GM13977 (cell line): ENCODE measurements at regions of chr16 and their contacts with region 1.

Region 1: DNA sequence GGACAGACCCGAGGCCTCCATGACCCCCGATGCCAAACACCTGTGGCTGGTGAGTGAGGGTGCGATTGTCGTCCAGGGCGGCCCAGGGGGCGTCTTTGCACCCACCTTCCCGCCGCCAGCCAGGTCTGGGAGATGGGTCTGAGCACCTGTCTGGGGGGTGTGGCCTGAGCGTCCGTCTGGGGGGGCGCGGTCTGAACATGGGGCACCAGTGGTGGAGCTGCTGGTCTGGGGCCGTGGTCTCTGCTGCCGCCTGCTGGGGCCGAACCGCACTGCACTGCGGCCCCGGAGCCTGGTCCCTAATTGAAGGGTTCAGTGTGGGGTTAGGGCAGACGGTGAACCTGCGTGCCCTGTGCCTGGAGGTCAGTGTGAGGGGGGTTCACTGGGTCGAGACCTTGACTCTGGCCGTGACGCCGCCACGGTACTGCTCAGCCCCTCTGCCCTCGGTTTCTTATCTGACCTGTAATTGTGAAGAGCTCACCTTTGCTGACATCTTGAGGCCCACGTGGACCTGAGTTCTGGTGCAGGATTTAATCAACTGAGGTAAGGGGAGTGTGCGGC is 12.6 kb upstream of the TCF25 start:
- DNase-seq: peak; percentile 96
- CTCF ChIP-seq: peak; percentile 100

Region 2: GRCh38 chr16:89711601-89712273 is 149.1 kb before region 1 on chr16:
- in situ Hi-C with region 1: loop called (anchors 10 kb)
- DNase-seq: peak; percentile 99
- CTCF ChIP-seq: no peak

Region 3: DNA sequence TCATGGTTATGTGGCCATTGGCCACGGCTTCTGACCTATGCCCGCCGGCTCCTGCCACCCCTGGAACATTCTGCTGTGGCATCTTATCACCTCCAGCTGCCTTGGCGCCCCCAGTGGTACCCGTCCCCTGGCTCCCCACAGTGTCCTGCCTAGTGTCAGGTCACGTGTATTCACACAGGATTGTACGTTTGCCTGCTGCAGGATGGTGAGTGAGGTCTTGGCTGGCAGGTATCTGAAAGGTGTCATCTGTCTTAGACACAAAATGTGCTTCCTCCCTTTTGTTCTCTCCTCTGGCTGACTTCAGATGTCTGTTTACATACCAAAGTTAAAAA is 133.5 kb after region 1 on chr16:
- in situ Hi-C with region 1: no loop called
- DNase-seq: no peak
- CTCF ChIP-seq: no peak